Adrenal gland (tissue), 19 donors: ENCODE measurements at regions of chr17 and their contacts with region 1.

Region 1: DNA sequence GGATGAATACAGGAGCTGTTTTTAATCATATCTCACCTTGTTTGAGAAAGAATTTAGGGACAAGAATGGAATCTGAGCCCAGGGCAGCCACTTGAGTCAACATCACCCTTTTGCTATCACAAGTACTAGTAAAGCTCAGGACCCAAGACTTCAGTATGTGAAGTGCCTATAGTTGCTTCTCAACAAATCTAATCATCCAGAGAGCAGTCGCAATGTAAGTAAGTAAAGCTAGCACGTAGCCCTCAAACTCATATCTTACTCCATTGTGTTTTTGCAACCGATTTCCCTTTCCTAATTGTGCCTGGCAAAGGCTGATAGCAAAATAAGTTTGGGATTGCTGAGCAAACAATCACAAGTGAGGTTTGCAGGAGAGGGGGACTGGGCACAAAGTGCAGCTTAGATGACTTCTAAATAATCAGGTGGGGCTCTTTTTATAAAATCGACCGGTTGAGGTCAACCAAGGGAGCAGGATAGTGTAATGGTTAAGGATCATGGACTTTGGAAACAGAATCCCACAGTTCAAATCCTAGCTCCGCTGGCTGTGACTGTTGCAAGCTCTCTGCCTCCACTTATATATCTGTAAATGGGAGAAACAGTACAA is 13.0 kb downstream of the TOB1 start:
- DNase-seq: no peak
- H3K4me3 ChIP-seq: no peak overlapping the region
- H3K27ac ChIP-seq: no peak overlapping the region
- H3K4me1 ChIP-seq: no peaks in the 10 kb centered on the region
- H3K27me3 ChIP-seq: no peaks in the 10 kb centered on the region
- CTCF ChIP-seq: no peak
- POLR2A ChIP-seq: no peak

Region 2: DNA sequence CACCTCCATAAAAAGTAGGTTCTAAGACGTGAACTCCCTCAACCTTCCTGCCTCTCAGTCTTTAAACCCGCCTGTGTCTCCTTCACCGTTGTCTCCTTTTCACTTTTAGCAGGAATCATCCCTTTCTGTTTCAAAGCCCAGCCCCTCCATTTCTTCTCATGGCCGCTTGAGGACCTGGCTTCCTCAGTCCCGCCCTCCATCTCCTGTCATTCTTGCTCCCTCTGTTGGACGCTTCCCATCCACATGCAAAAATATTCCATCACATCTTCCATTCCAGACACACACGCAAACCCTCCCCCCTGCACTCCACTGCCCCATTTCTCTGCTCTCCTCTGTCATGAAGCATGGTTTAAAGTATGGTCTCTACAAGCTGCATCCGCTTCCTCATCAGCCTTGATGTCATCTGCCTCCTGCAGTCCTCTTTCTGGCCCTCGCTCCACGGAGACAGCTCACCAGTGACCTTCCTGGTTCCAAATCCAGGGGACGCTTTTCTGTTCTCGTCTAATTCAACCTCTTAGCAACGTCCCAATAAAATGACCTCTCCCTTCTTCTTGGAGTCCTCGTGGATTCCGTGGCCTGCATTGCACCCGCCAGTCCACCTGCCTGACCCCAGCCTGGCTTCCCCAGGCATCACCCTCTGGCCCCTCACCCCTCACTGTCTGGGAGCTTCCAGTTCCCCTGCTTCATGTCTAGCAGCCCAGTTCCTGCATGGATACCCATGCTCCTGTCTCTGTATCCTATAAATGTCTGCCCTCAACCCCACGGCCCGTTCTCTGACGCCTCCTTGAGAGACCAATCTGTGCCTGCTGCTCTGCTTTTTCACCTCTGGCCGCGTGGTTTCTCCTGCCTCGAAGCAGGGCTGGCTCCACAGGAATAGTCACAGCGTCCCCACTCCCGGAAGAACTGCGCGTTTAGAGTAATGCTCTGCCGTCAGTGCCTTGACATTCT is 171.6 kb before region 1 on chr17:
- intact Hi-C with region 1: no loop called
- DNase-seq: peak in 6 of 7 donors; percentile 75 to 83 (median 76)
- H3K4me3 ChIP-seq: no peak overlapping the region
- H3K27ac ChIP-seq: peak overlapping the region; percentile 36 to 87 (median 76)
- H3K4me1 ChIP-seq: peaks cover 19 to 32% of the 10 kb centered on the region in 2 donors
- H3K27me3 ChIP-seq: no peaks in the 10 kb centered on the region
- CTCF ChIP-seq: peak in 5 of 6 experiments; percentile 51 to 79 (median 70)
- POLR2A ChIP-seq: peak in 1 of 2 donors; percentile 40

Region 3: GRCh38 chr17:50816771-50817751 is 36.1 kb before region 1 on chr17:
- intact Hi-C with region 1: no loop called
- DNase-seq: peak in 5 of 7 donors; percentile 44 to 61 (median 52)
- H3K4me3 ChIP-seq: no peak overlapping the region
- H3K27ac ChIP-seq: no peak overlapping the region
- H3K4me1 ChIP-seq: peaks cover 0 to 6% of the 10 kb centered on the region in 2 donors
- H3K27me3 ChIP-seq: no peaks in the 10 kb centered on the region
- CTCF ChIP-seq: peak; percentile 51 to 75 (median 66)
- POLR2A ChIP-seq: no peak

Region 4: DNA sequence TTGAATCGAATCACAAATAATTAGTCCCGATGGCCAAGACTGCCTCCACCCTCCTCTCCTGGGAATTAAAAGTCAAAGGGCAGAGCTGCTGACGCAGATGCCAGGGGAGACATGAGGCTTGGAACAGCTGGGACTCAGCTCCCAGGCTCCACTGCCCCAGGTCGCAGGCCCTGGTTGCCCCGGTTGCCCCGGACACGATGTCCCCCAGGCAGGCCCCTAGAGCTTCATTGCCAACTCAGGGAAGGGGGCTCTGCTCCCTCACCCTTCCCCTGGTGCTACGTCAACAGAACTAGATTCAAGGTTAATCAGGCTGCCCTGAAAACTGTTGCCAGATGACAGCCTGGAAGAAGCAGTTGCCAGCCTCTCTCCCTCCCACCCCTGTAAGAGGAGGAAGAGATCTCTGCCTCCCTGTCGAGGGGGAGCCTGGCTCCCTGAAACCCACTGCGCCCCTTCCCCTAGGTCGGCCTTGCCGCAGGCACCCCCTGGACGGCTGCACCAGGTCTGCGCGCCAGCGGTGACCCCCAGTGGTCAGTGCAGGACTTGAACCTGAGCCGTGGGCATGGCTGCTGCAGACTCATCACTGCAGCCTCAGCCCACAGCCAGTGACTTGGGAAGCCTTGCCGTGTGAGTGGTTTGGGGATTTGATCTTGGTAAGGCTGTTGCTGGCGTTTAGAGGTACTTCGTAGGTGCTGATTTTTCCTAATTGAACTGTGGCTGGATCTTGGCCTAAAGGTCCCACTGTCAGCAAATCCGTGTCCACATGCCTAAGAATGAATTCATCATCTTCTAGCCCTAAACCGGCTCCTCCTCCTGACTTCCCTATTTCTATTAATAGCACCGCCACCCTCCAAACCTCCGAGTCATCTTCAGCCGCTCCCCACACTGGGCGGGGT is 97.1 kb after region 1 on chr17:
- intact Hi-C with region 1: loop called (anchors 5 kb)
- DNase-seq: peak; percentile 90 to 95 (median 95)
- H3K4me3 ChIP-seq: no peak overlapping the region
- H3K27ac ChIP-seq: peak overlapping the region; percentile 90 to 99 (median 97)
- H3K4me1 ChIP-seq: peaks cover 52 to 60% of the 10 kb centered on the region in 2 donors
- H3K27me3 ChIP-seq: no peaks in the 10 kb centered on the region
- CTCF ChIP-seq: peak; percentile 17 to 84 (median 76)
- POLR2A ChIP-seq: peak; percentile 45 to 51

Region 5: DNA sequence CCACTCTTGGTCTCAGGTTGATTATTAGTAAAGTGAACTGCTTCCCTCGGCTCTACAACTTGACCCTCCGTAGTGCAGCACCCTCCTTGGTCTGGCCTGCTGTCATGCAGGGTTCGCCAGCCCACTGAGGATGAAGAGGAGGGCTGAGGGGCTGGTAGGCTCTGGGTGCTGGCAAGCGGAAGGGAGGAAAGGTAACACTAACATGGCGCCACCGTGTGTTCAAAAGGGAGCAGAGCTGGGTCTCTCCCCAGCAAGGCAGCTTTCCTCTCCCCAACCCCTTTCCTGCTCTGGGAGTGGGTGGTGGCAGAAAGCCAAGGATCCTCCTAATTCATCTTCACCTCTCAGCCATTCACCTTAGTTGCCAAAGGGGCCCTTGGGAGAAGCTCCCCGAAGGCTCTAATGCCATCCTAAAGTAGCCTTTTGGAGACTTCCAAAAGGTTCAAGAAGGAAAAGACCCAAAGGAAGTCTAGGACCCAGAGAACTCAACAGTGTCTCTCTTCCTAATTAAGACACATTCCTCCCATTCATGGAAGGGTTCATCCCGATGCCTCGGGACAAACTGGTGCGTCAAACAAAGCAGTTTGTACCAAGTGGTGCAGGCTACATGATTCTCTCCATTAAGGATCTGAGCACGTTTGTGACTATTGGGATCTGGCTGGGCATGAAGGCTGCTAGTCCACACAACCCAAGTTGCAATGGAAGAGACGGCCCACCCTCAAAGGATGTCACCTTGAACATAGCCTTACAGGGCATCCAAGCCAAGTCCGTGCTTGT is 103.8 kb after region 1 on chr17:
- intact Hi-C with region 1: loop called (anchors 5 kb)
- DNase-seq: peak; percentile 67 to 88 (median 79)
- H3K4me3 ChIP-seq: no peak overlapping the region
- H3K27ac ChIP-seq: peak overlapping the region; percentile 75 to 99 (median 95)
- H3K4me1 ChIP-seq: peaks cover 35 to 41% of the 10 kb centered on the region in 2 donors
- H3K27me3 ChIP-seq: no peaks in the 10 kb centered on the region
- CTCF ChIP-seq: peak; percentile 40 to 78 (median 66)
- POLR2A ChIP-seq: no peak